ENCODE measurements at regions of chr2 and their contacts with region 1.

Region 1: GRCh38 chr2:75241696-75242095 is 42.4 kb upstream of the TACR1 start:
- DNase-seq: peak; percentile 25
- ATAC-seq: peak; percentile 66
- H3K4me3 ChIP-seq: no peak overlapping the region
- H3K27ac ChIP-seq: no peak overlapping the region
- H3K4me1 ChIP-seq: no peaks in the 10 kb centered on the region
- H3K27me3 ChIP-seq: no peaks in the 10 kb centered on the region; a peak in 1 of 5 replicates
- CTCF ChIP-seq: peak; percentile 65
- EP300 ChIP-seq: no peak
- POLR2A ChIP-seq: no peak
- RAD21 ChIP-seq: peak; percentile 67; the same call in 1 of the 2 replicates

Region 2: GRCh38 chr2:75053484-75054112 is 188.1 kb before region 1 on chr2:
- CTCF ChIA-PET with region 1: no interaction called
- POLR2A ChIA-PET with region 1: no interaction called
- in situ Hi-C with region 1: loop called (anchors 10 kb)
- intact Hi-C with region 1: no loop called
- DNase-seq: peak; percentile 65
- ATAC-seq: peak; percentile 100
- H3K4me3 ChIP-seq: no peak overlapping the region
- H3K27ac ChIP-seq: no peak overlapping the region
- H3K4me1 ChIP-seq: no peaks in the 10 kb centered on the region
- H3K27me3 ChIP-seq: no peaks in the 10 kb centered on the region
- CTCF ChIP-seq: peak; percentile 88
- EP300 ChIP-seq: no peak
- POLR2A ChIP-seq: no peak
- RAD21 ChIP-seq: 0 out of 2 replicates have a peak, but pooled peaks have one; percentile 27

Region 3: DNA sequence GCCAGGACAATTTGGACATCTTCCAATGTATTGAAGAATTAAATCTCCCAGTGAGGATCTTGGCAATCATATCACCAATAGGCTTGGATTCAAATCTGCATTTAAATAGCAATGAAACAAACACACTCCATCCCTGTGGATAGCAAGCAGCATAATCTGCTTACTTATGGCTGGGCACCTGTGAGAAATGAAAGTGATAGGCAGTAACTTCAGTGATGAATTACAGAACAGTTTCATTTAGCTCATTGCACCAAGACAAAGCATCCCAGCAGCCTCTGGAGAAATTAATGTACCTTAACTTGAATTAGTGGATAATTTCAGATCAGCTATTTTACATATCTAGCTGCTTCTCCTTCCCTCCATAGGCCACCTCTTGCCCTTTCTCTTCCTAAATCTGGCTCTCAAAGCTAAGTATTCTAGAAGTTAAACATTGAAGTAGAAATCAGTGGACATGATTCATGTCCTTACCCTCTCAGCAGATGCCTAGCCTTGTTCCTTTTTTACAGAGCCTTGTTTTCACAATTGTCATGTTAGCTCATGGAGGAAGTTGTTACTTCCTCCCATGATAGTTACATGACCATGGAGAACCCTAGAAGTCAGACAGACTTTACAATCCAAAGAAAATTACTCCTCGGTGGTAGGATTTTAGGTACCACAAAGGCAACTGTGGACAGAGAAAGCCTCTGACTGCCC is 46.1 kb after region 1 on chr2:
- CTCF ChIA-PET with region 1: no interaction called
- POLR2A ChIA-PET with region 1: no interaction called
- in situ Hi-C with region 1: no loop called
- intact Hi-C with region 1: no loop called
- DNase-seq: no peak
- ATAC-seq: no peak
- H3K4me3 ChIP-seq: no peak overlapping the region
- H3K27ac ChIP-seq: no peak overlapping the region
- H3K4me1 ChIP-seq: no peaks in the 10 kb centered on the region
- H3K27me3 ChIP-seq: peaks cover 0 to 14% of the 10 kb centered on the region in 2 experiments; a peak in 2 of 5 replicates
- CTCF ChIP-seq: no peak
- EP300 ChIP-seq: no peak
- POLR2A ChIP-seq: no peak
- RAD21 ChIP-seq: no peak